Mammary epithelial cell (primary cell): ENCODE measurements at regions of chr5 and their contacts with region 1.

Region 1: GRCh38 chr5:132951897-132952296 is 11.5 kb downstream of the AFF4 start:
- DNase-seq: no peak
- H3K4me3 ChIP-seq: no peak overlapping the region
- H3K27ac ChIP-seq: no peak overlapping the region
- H3K4me1 ChIP-seq: peaks cover 7% of the 10 kb centered on the region
- H3K27me3 ChIP-seq: no peaks in the 10 kb centered on the region
- CTCF ChIP-seq: no peak

Region 2: GRCh38 chr5:132556763-132557477 is 395.0 kb before region 1 on chr5 and contains the start of gene RAD50:
- CTCF ChIA-PET with region 1: no interaction called
- dilution Hi-C with region 1: no loop called
- in situ Hi-C with region 1: no loop called
- intact Hi-C with region 1: no loop called
- DNase-seq: peak; percentile 92
- H3K4me3 ChIP-seq: peak within 1 kb of the TSS; percentile 73 to 90 (median 75)
- H3K27ac ChIP-seq: peak within 1 kb of the TSS; percentile 81
- H3K4me1 ChIP-seq: peaks cover 4% of the 10 kb centered on the region
- H3K27me3 ChIP-seq: no peaks in the 10 kb centered on the region
- CTCF ChIP-seq: no peak
- total RNA-seq, gene RAD50: 29.8 to 56.9 TPM

Region 3: DNA sequence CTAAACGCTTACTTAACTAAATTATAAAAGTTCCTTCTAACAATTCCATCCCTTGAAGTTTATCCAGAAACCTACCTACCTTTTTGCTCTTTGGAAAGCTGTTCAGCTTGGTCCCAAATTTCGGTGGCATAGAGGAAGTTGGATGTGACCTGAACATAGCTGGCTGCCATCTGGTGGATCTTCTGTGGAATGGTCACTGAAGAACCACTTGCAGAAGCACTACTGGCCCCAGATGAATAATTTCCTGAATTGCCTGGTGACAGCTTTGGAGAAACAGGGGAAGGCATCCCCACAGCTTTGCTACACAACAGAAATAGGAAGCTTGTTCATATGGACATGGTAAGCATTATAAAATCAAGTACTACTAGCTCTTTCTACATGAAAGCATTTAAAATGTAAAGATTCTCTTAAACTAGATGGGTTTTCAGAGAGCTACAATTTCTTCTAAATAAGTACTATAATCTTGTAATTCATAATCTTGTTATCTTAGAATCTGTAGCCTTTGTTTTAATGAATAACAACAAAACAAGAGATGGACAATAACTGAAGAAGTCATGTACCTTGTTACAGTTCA is 68.5 kb before region 1 on chr5:
- CTCF ChIA-PET with region 1: no interaction called
- dilution Hi-C with region 1: loop called (anchors 5 kb)
- in situ Hi-C with region 1: no loop called
- intact Hi-C with region 1: no loop called
- DNase-seq: peak; percentile 49
- H3K4me3 ChIP-seq: no peak overlapping the region
- H3K27ac ChIP-seq: no peak overlapping the region
- H3K4me1 ChIP-seq: no peaks in the 10 kb centered on the region
- H3K27me3 ChIP-seq: no peaks in the 10 kb centered on the region
- CTCF ChIP-seq: peak; percentile 56 to 69

Region 4: GRCh38 chr5:133015466-133015865 is 63.6 kb after region 1 on chr5:
- CTCF ChIA-PET with region 1: no interaction called
- dilution Hi-C with region 1: loop called (anchors 5 kb)
- in situ Hi-C with region 1: no loop called
- intact Hi-C with region 1: no loop called
- DNase-seq: no peak
- H3K4me3 ChIP-seq: no peak overlapping the region
- H3K27ac ChIP-seq: no peak overlapping the region
- H3K4me1 ChIP-seq: no peaks in the 10 kb centered on the region
- H3K27me3 ChIP-seq: no peaks in the 10 kb centered on the region
- CTCF ChIP-seq: no peak